ENCODE measurements at regions of chr18 and their contacts with region 1.

Region 1: GRCh38 chr18:55275039-55275901 is 312.7 kb downstream of the TCF4 start:
- DNase-seq: peak; percentile 86
- H3K4me3 Mint-ChIP-seq: no peak overlapping the region
- H3K27ac Mint-ChIP-seq: no peak overlapping the region
- H3K4me1 Mint-ChIP-seq: no peaks in the 10 kb centered on the region
- H3K27me3 Mint-ChIP-seq: no peaks in the 10 kb centered on the region
- CTCF ChIP-seq: peak; percentile 21

Region 2: GRCh38 chr18:55096261-55096951 is 178.9 kb before region 1 on chr18:
- CTCF ChIA-PET with region 1: no interaction called
- POLR2A ChIA-PET with region 1: no interaction called
- intact Hi-C with region 1: loop called (anchors 1 kb)
- DNase-seq: peak; percentile 65
- H3K4me3 Mint-ChIP-seq: no peak overlapping the region
- H3K27ac Mint-ChIP-seq: no peak overlapping the region
- H3K4me1 Mint-ChIP-seq: peaks cover 11% of the 10 kb centered on the region
- H3K27me3 Mint-ChIP-seq: no peaks in the 10 kb centered on the region
- CTCF ChIP-seq: peak; percentile 29

Region 3: DNA sequence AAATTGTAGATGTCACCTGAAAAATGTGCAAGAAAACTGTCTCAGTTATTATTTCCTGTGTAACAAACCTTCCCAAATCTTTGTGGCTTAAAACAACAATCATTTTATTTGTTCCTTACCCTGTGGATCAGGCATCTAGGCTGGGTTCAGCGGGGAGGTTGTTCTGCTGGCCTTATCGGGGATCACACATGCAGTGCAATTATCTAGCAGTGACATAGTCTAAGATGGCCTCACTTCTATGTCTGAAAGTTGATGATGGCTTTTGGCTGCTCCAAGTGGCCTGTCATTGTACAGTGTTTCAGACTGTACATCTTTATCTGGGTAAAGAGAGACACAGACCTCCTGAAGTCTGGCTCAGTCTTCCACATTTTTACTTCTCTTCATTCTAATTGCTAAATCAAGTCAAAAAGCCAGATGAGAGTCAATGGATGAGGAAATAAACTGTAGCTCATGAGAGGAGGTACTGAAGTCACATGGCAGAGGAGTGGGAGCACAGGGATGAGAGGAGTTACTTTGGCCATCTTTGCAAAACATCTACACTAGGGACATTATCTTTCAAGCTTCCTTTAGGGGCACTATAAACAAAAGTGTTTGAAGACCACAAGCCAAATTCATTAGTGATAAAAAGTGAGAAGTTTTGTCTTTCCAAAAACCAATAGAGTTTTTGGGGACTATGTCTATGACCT is 72.9 kb before region 1 on chr18:
- CTCF ChIA-PET with region 1: no interaction called
- POLR2A ChIA-PET with region 1: no interaction called
- intact Hi-C with region 1: no loop called
- DNase-seq: no peak
- H3K4me3 Mint-ChIP-seq: no peak overlapping the region
- H3K27ac Mint-ChIP-seq: no peak overlapping the region
- H3K4me1 Mint-ChIP-seq: no peaks in the 10 kb centered on the region
- H3K27me3 Mint-ChIP-seq: no peaks in the 10 kb centered on the region
- CTCF ChIP-seq: no peak